Heart right ventricle (tissue), 16 donors: ENCODE measurements at regions of chr11 and their contacts with region 1.

Region 1: DNA sequence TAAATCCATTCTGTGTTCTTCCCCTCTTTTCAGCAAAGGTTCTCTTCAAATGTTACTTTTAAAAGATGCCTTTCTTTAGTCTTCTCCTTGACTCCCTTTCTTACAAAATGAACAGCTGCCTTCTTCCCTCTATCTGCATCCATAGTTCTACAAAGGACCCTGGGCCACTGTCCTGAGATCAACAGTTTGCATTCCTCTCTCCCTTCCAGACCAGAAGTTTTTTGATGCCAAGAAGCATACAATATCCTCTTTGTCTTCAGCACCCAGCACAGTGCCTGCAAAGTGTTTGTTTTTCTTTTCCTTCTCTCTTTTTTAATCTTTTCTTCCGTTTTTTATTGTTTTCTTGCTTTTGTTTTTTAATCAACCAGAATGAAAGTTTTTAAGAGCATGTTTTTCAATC is 183.5 kb upstream of the SNX19 start:
- DNase-seq: no peak
- ATAC-seq: no peak
- H3K4me3 ChIP-seq: no peak overlapping the region
- H3K27ac ChIP-seq: no peak overlapping the region
- H3K4me1 ChIP-seq: no peaks in the 10 kb centered on the region
- H3K27me3 ChIP-seq: peaks cover 0 to 19% (median 0%) of the 10 kb centered on the region in 7 donors
- CTCF ChIP-seq: no peak

Region 2: DNA sequence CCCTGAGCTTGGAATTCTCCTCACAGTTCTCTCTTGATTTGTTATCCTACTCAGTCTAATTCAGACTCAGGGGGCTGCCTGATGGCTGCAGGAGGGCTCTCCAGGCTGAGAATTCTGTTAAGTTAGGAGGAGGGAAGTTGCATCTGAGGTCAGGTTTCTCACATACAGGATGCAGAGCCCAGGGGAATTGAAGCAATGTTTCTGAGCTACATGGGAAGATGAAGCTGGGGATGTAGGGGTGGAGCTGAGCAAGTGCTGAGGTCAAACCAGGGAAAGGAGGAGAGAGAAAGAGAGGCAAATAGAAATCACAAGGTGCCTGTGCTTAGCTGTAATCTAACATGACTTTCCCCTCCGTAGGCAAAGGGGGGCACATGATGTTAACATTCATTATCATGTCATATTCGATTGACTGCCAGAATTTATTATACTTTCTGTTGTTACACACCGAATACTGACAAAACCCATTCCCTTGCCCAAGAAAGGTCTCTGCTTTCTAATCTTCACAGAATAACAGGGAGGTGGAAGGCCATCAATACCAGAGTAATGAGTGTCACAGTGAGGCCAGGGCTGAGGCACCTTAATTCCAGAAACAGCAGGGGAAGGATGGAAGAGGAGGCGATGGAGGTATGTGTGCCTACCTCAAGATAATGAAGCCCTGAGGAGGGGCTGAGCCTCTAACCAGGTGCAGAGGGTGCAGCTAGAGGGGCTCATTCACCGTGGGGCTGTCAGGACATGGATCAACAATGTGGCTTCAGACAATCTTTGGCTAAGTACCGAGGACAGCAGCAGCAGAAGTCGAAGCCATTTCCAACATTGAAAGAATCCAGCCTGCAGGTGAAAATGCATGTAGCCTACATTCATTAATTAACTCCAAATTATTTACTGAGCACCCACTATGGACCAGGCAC is 21.9 kb after region 1 on chr11:
- intact Hi-C with region 1: loop called in 1 of 10 experiments (anchors 1 kb)
- DNase-seq: no peak
- ATAC-seq: no peak
- H3K4me3 ChIP-seq: no peak overlapping the region
- H3K27ac ChIP-seq: no peak overlapping the region
- H3K4me1 ChIP-seq: no peaks in the 10 kb centered on the region
- H3K27me3 ChIP-seq: peaks cover 0 to 12% (median 0%) of the 10 kb centered on the region in 7 donors
- CTCF ChIP-seq: no peak